Endothelial cell of umbilical vein (primary cell): ENCODE measurements at regions of chr1 and their contacts with region 1.

Region 1: DNA sequence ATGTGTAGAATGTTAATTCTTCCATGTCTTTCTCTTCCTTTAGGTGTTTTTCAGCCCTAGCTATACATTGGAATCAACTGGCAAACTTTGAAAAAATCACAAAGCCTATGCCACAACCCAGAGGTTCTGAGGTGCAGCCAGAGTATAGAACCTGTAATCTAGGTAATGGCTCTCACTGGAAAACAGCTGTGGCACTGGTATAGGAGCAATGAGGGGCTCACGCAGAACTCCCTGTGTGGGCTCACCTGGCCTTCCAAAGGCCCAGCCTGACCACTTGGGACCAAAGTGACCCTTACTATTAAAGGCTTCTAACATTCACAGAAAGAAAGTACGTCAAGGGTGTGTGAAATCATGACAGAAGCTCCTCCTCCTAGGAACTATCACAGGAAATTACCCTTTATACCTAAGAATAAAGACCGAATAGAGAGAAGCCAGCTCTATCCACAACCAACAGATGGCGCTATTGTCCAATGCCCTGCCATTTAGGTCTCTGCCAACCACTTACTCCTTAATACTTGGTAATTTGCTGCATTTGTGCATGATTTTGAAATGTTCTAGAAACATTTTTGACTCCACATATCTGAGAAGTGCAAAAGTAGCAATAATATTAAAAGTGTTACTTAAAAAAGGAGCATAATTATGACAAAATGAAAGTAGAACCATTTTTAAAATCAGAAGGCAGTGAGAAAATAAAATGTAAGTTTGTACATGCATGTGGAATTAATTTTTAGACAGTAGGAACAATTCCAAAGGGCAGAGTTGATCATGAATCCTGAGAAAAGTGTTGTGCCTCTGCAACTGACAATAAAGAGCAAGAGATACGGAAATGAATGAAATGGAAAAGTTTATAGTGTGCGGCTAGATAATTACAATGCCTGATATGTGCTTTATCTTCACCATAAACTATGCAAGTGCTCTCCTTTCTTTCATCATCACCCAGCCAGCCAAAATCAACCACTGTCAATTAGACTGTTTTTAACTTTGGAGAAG is 93.1 kb upstream of the HAO2 start:
- DNase-seq: peak; percentile 63
- H3K4me3 ChIP-seq: no peak overlapping the region
- H3K27ac ChIP-seq: no peak overlapping the region
- H3K4me1 ChIP-seq: peaks cover 16% of the 10 kb centered on the region
- H3K27me3 ChIP-seq: peaks cover 9 to 18% of the 10 kb centered on the region in 2 experiments
- CTCF ChIP-seq: peak; percentile 84 to 87
- POLR2A ChIP-seq: no peak

Region 2: GRCh38 chr1:118335331-118335732 is 940.1 kb before region 1 on chr1:
- CTCF ChIA-PET with region 1: no interaction called
- POLR2A ChIA-PET with region 1: no interaction called
- dilution Hi-C with region 1: no loop called
- intact Hi-C with region 1: no loop called
- DNase-seq: no peak
- H3K4me3 ChIP-seq: no peak overlapping the region
- H3K27ac ChIP-seq: no peak overlapping the region
- H3K4me1 ChIP-seq: no peaks in the 10 kb centered on the region
- H3K27me3 ChIP-seq: no peaks in the 10 kb centered on the region
- CTCF ChIP-seq: no peak
- POLR2A ChIP-seq: no peak

Region 3: GRCh38 chr1:119008483-119009311 is 266.7 kb before region 1 on chr1:
- CTCF ChIA-PET with region 1: interaction called, 6 read pairs
- POLR2A ChIA-PET with region 1: no interaction called
- dilution Hi-C with region 1: no loop called
- intact Hi-C with region 1: loop called (anchors 5 kb)
- DNase-seq: peak; percentile 81
- H3K4me3 ChIP-seq: peak overlapping the region in 1 of 3 experiments; percentile 3
- H3K27ac ChIP-seq: no peak overlapping the region
- H3K4me1 ChIP-seq: peaks cover 10% of the 10 kb centered on the region
- H3K27me3 ChIP-seq: peaks cover 59 to 70% of the 10 kb centered on the region in 2 experiments
- CTCF ChIP-seq: peak; percentile 42 to 54
- POLR2A ChIP-seq: no peak

Region 4: DNA sequence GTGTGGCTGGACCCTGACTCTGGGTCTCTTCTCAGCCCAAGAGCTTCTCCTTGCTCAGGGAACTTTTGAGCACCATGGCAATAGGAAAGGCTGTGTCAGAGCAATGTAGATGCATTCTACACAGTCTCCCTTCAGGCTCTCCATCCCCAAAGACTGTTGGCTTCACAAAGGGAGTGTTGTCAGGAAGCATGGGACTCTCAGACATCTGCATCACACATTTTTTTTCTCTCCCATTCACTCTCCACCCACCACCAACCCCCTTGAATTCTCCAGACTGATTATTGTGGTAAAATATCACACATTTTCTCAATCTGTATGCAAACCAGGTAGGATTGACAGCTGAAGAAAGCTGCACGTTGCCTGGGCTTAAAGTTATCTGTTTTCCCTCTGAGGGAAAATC is 29.6 kb before region 1 on chr1:
- CTCF ChIA-PET with region 1: interaction called, 10 read pairs
- POLR2A ChIA-PET with region 1: no interaction called
- dilution Hi-C with region 1: no loop called
- intact Hi-C with region 1: loop called (anchors 1 kb)
- DNase-seq: no peak
- H3K4me3 ChIP-seq: no peak overlapping the region
- H3K27ac ChIP-seq: no peak overlapping the region
- H3K4me1 ChIP-seq: no peaks in the 10 kb centered on the region
- H3K27me3 ChIP-seq: peaks cover 0 to 2% of the 10 kb centered on the region in 2 experiments
- CTCF ChIP-seq: no peak
- POLR2A ChIP-seq: no peak

Region 5: GRCh38 chr1:119286587-119287181 is 11.2 kb after region 1 on chr1:
- CTCF ChIA-PET with region 1: interaction called, 22 read pairs
- POLR2A ChIA-PET with region 1: no interaction called
- dilution Hi-C with region 1: no loop called
- intact Hi-C with region 1: no loop called
- DNase-seq: peak; percentile 28
- H3K4me3 ChIP-seq: no peak overlapping the region
- H3K27ac ChIP-seq: no peak overlapping the region
- H3K4me1 ChIP-seq: no peaks in the 10 kb centered on the region
- H3K27me3 ChIP-seq: peaks cover 4 to 11% of the 10 kb centered on the region in 2 experiments
- CTCF ChIP-seq: peak; percentile 49 to 65
- POLR2A ChIP-seq: no peak

Region 6: DNA sequence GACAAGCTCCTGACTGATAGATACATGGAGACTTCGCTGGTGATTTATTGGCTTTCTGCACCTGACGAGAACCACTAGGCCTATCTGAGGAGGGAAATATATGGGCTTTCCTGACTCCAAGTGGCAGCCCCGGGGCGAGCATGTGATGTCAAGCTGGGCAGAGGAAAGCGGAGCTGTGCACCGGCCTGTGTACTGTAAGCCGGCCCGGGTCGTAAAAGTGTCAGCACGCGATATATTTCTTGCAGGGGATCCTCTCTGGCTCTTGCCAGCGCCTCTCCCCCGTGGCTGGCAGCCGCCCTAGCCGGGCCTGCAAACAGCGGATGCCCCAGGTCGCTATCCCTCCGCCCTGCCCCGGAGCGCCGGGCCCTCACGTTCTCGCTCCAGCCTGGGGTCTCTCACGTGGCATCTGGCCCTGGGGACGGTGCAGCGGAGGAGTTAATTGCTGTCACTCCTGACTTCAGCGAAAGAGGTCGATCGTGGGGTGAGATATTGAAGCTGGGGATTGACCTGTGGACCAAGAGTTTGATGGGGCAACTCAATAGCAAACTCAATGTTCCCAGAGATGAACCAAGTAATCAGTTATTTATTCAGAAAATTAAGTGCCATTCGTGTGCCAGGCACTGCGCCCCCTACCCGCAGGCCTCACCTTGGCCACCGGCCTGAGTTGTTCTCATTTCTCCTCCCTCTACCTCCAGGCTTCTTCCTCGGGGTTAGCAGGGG is 52.2 kb after region 1 on chr1:
- CTCF ChIA-PET with region 1: interaction called, 41 read pairs
- POLR2A ChIA-PET with region 1: no interaction called
- dilution Hi-C with region 1: no loop called
- intact Hi-C with region 1: loop called (anchors 1 kb)
- DNase-seq: peak; percentile 50
- H3K4me3 ChIP-seq: peak overlapping the region; percentile 24 to 33 (median 31)
- H3K27ac ChIP-seq: no peak overlapping the region
- H3K4me1 ChIP-seq: peaks cover 2% of the 10 kb centered on the region
- H3K27me3 ChIP-seq: peaks cover 2 to 3% of the 10 kb centered on the region in 2 experiments
- CTCF ChIP-seq: peak; percentile 61 to 78
- POLR2A ChIP-seq: no peak

Region 7: DNA sequence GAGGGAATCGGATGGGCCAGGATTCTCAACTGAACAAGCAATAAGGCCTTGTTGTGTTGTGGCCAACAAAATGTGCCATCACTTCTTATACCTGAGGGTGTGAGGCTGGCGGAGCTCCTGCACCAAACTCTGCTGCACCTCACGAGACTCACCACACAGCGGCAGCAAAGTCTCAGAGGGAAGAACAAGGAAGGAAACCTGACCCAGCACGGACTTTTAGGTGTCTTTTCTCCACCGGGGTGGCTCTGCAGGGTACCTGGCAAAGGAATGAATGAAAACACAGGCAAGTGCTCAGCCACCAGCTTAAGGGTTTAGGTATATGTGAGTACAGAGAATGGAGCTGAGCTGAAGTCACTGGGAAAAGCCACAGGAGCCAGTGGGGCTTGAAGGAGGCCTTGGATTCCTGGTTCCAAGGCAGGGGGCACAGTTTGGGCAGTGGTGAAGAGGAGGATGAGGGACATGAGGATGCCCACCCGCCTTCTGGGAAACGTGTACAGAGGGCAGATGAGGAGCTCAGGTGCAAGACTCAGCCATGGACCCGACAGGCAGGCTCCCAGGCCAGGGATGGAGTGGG is 200.5 kb after region 1 on chr1:
- CTCF ChIA-PET with region 1: interaction called, 10 read pairs
- POLR2A ChIA-PET with region 1: no interaction called
- dilution Hi-C with region 1: no loop called
- intact Hi-C with region 1: no loop called
- DNase-seq: peak; percentile 31
- H3K4me3 ChIP-seq: no peak overlapping the region
- H3K27ac ChIP-seq: no peak overlapping the region
- H3K4me1 ChIP-seq: no peaks in the 10 kb centered on the region
- H3K27me3 ChIP-seq: no peaks in the 10 kb centered on the region
- CTCF ChIP-seq: peak; percentile 44 to 60
- POLR2A ChIP-seq: no peak